WTC11 (cell line): ENCODE measurements at regions of chr6 and their contacts with region 1.

Region 1: DNA sequence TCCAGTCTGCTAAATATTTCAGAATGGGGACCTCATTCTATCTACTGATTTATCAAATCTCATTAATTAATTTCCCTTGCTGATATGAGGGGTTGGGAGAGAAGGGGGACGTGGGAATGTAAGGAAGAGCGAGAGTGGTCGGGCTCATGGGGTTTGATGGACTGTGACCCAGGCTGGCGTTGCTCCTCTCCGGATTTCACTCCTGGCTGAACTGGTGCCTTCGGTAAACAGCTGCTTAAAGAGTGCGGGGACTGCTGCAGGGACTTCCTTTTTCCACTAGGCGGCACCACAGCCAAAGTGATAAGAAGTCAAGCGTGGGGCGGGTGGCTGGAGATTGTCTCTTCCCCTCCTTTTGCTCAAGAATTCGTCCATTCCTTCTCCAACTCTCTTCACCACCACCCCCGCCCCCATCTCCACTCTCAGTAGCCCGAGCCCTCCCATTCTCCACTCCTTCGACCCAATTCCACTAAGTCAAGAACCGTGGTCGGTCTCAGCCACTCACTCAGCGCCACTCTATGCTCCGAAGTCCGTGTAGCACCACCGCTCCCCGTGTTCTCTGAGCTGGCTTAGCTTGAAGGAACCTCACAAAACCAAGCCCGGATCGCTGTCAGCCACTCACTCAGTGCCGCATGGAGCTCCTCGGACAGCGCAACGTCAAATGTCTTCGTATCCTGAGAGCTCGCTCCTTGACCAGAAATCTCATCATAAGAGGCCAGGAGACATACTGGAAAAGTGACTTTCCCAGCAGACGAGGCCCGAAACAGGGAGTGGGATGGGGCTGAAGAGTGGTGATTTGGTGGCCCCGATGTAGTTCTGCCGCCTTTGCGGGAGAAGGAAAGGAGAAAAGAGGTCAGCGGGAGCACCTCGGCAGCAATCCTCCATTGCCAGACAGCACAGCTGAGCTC is 9.7 kb downstream of the TRIM31 start:
- DNase-seq: peak; percentile 90
- ATAC-seq: peak; percentile 51
- H3K4me3 Mint-ChIP-seq: peak overlapping the region; percentile 80
- H3K27ac Mint-ChIP-seq: no peak overlapping the region
- H3K4me1 Mint-ChIP-seq: peaks cover 30% of the 10 kb centered on the region
- H3K27me3 Mint-ChIP-seq: peaks cover 83% of the 10 kb centered on the region
- CTCF ChIP-seq: peak; percentile 85

Region 2: DNA sequence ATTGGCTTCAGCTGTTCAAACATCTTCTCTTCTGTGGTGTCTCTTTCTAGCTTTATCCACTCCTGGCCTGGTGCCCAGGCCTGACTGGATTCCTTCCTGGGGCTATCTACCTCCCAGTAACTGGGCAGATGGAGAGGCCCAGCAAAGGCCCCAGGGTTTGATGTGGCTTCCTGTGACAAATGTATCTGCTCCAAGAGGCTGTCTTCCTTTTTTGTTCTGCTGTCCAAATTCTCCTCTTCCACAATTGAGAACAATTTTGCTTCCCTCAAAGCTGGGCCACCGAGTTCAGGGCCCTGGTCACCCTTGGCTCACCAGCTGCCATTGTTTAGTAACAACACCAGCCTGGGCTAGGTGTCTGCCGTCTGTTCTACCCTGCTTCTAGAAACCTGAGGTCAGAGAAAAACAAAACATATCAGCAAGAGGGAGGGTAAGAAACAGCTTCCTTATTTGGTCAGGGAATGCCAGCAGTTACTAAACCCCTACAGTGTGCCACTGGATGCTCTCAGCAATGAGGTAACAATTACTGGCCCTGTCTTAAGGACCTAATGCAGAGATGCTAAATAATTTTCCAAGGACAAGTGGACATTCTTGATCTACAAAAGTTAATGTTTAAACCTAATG is 426.1 kb before region 1 on chr6:
- CTCF ChIA-PET with region 1: no interaction called
- POLR2A ChIA-PET with region 1: no interaction called
- DNase-seq: no peak
- ATAC-seq: peak; percentile 80
- H3K4me3 Mint-ChIP-seq: no peak overlapping the region
- H3K27ac Mint-ChIP-seq: peak overlapping the region; percentile 95
- H3K4me1 Mint-ChIP-seq: peaks cover 48% of the 10 kb centered on the region
- H3K27me3 Mint-ChIP-seq: peaks cover 15% of the 10 kb centered on the region
- CTCF ChIP-seq: no peak

Region 3: DNA sequence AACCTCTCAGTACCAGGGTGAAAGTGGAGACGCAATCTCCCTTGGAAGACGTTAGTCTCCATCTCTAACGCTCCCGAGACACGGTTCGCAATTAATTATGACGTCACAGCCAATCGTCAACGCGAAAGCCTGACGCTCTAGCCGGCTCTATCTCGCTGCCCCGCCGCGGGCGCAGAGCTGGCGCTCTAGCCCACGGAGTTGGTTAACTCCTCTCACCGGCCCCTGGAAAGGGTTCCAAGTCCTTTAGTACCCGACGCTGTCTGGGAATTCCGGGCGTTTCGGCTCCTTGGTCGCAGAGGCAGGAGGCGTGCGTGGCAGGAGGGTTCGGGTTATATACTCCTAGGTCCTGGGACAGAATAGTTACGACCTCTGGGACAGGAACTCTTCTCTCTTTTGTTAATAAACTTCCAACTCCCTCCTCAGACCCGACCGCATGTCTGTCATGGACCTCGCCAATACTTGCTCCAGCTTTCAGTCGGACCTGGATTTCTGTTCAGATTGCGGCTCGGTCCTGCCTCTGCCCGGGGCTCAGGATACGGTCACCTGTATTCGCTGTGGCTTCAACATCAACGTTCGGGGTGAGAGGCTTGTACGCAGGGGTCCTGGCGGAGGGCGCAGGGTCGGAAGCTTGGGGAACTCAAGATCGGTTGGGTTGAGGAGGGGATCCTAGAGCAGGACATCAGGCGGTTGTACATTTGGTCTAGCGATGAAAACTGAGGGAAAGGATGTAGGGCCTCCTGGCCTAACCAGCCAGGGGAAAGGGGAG is 41.9 kb before region 1 on chr6 and contains the start of gene POLR1H:
- CTCF ChIA-PET with region 1: interaction called, 16 read pairs
- POLR2A ChIA-PET with region 1: no interaction called
- DNase-seq: peak; percentile 92
- ATAC-seq: peak; percentile 98
- H3K4me3 Mint-ChIP-seq: peak within 1 kb of the TSS; percentile 98
- H3K27ac Mint-ChIP-seq: peak within 1 kb of the TSS; percentile 94
- H3K4me1 Mint-ChIP-seq: peaks cover 28% of the 10 kb centered on the region
- H3K27me3 Mint-ChIP-seq: no peaks in the 10 kb centered on the region
- CTCF ChIP-seq: no peak
- total RNA-seq, gene POLR1H: 37.7 to 39.6 TPM (median 38.8 TPM) in 3 replicates

Region 4: GRCh38 chr6:30091577-30092381 is 11.4 kb before region 1 on chr6:
- CTCF ChIA-PET with region 1: interaction called, 12 read pairs
- POLR2A ChIA-PET with region 1: no interaction called
- DNase-seq: no peak
- ATAC-seq: peak; percentile 55; the same call in 1 of the 2 replicates
- H3K4me3 Mint-ChIP-seq: no peak overlapping the region
- H3K27ac Mint-ChIP-seq: no peak overlapping the region
- H3K4me1 Mint-ChIP-seq: peaks cover 8% of the 10 kb centered on the region
- H3K27me3 Mint-ChIP-seq: peaks cover 42% of the 10 kb centered on the region
- CTCF ChIP-seq: no peak

Region 5: DNA sequence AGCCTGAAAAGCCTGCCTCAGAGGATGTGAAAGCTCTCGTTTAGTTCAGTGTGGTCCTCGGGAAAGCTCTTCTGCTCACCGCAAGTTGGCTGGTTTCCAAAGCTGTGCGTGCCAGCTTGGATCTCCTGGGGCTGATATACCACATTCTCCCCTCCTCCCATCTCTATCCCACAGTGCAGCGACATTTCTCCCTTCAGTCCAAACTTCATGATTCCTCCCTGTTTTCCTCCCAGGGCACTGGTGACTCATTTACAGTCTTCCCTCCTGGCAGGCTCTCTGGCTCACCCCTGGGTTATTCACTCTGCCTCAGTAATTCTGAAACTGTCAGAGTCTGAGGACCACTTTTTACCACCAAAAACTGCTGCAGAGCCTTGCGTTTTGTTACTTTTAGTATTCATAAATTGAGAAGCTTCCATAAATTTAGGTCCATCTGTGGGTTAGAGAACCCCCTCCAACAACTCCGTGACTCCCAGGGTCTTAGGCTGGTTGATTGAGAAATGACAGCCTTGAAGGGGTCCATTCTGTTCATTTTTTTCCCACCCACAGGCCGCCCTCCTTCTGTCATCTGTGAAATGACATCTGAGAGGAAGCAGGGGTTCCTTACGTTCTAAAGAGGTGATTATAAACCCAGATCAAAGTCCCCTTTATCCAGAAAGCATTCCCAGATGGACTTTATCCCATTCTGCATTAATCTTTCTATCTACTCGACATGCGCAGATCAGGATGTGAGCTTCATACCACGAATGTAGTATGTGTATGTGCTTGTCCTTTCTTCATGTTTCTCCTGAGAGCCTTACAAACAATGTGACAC is 51.7 kb after region 1 on chr6:
- CTCF ChIA-PET with region 1: interaction called, 13 read pairs
- POLR2A ChIA-PET with region 1: no interaction called
- DNase-seq: no peak
- ATAC-seq: no peak
- H3K4me3 Mint-ChIP-seq: no peak overlapping the region
- H3K27ac Mint-ChIP-seq: no peak overlapping the region
- H3K4me1 Mint-ChIP-seq: no peaks in the 10 kb centered on the region
- H3K27me3 Mint-ChIP-seq: peaks cover 36% of the 10 kb centered on the region
- CTCF ChIP-seq: no peak

Region 6: DNA sequence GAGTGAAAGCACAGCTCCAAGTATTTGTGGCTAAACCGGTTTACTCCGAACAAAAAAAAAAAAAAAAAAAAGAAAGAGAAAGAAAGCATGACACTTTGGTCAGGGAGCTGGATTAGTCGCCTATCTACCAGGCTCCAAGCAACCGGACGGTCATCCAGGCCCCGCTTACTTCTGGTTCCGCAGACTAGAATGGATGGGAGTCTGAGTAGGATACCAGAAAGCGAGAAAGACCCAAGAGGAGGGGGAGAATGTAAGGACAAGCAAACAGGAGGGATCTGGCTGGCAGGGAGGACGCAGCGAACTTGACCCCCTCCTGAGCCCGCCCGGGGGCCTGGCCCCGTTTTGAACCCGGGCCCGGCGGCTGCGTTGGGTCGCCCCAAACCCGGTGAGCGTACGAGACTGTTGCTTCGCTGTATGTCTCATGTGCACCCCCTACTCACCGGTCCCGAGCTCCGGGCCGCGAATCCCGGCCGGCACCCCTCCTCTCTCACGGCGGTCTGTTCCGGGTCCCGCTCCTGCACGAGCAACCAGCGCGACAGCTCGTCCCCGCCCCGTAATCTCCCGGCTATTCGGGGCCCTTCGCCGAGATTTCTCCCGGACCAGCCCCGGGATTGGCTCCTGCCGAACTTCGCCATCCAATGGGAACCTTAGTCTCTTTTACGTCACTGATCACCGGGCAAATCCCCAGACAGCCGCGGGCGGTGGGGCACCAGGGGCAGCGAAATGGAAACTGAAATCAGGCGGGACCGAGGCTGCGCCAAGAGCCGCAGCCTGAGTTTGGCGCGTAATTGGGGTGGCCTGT is 109.8 kb after region 1 on chr6 and contains the start of gene TRIM26:
- CTCF ChIA-PET with region 1: interaction called, 22 read pairs
- POLR2A ChIA-PET with region 1: interaction called, 3 read pairs
- DNase-seq: peak; percentile 98
- ATAC-seq: peak; percentile 89
- H3K4me3 Mint-ChIP-seq: peak within 1 kb of the TSS; percentile 97
- H3K27ac Mint-ChIP-seq: peak within 1 kb of the TSS; percentile 99
- H3K4me1 Mint-ChIP-seq: peaks cover 46% of the 10 kb centered on the region
- H3K27me3 Mint-ChIP-seq: peaks cover 21% of the 10 kb centered on the region
- CTCF ChIP-seq: no peak
- total RNA-seq, gene TRIM26: 27.7 to 33.0 TPM (median 30.5 TPM) in 3 replicates